ENCODE measurements at regions of chr1 and their contacts with region 1.

Region 1: DNA sequence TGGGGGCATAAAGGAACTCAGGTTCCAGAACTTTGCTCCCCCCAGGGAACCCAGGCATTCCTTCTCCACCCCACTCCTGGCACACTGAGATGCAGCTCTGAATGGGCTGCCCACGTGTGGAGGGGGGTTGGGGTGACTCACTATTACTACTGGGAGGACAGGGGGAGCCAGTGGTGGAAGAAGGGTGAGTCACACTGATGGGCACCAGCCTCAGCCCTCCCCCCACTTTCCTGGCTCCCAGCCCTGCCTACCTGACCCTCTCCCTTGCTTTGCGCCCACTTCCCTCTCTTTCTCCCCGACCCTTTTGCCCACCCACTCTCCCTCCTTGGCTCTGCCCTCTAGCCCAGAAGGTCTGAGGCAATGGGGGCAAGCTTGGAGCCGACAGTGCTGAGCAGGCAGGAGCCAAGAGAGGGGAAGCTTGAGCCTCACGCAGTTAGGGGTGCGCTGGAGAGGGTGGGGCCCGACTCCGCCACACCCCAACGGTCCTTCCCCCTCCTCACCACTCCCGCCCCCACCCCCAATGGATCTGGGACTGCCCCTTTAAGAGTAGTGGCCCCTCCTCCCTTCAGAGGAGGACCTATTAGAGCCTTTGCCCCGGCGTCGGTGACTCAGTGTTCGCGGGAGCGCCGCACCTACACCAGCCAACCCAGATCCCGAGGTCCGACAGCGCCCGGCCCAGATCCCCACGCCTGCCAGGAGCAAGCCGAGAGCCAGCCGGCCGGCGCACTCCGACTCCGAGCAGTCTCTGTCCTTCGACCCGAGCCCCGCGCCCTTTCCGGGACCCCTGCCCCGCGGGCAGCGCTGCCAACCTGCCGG is at the start of gene LMNA:
- DNase-seq: peak; percentile 73 to 96 (median 74)
- H3K4me3 ChIP-seq: peak within 1 kb of the TSS; percentile 81
- H3K4me3 Mint-ChIP-seq: peak within 1 kb of the TSS; percentile 94 to 98 (median 96)
- H3K27ac ChIP-seq: peak within 1 kb of the TSS; percentile 91
- H3K27ac Mint-ChIP-seq: peak within 1 kb of the TSS; percentile 95 to 99 (median 98)
- H3K4me1 ChIP-seq: peaks cover 41% of the 10 kb centered on the region
- H3K4me1 Mint-ChIP-seq: peaks cover 12 to 49% (median 27%) of the 10 kb centered on the region in 4 donors
- H3K27me3 ChIP-seq: no peaks in the 10 kb centered on the region
- H3K27me3 Mint-ChIP-seq: no peaks in the 10 kb centered on the region
- total RNA-seq, gene LMNA: 29.7 to 33.8 TPM

Region 2: GRCh38 chr1:156054500-156055280 is 59.6 kb before region 1 on chr1 and contains the start of gene LAMTOR2:
- CTCF ChIA-PET with region 1: no interaction called
- POLR2A ChIA-PET with region 1: no interaction called
- intact Hi-C with region 1: no loop called
- DNase-seq: peak; percentile 91 to 95 (median 93)
- H3K4me3 ChIP-seq: peak within 1 kb of the TSS; percentile 96 to 99
- H3K4me3 Mint-ChIP-seq: peak within 1 kb of the TSS; percentile 93 to 98 (median 96)
- H3K27ac ChIP-seq: peak within 1 kb of the TSS; percentile 84
- H3K27ac Mint-ChIP-seq: peak within 1 kb of the TSS; percentile 93 to 99 (median 96)
- H3K4me1 ChIP-seq: peaks cover 17% of the 10 kb centered on the region
- H3K4me1 Mint-ChIP-seq: peaks cover 13 to 48% (median 28%) of the 10 kb centered on the region in 4 donors
- H3K27me3 ChIP-seq: no peaks in the 10 kb centered on the region
- H3K27me3 Mint-ChIP-seq: no peaks in the 10 kb centered on the region
- total RNA-seq, gene LAMTOR2: 33.0 to 35.5 TPM

Region 3: DNA sequence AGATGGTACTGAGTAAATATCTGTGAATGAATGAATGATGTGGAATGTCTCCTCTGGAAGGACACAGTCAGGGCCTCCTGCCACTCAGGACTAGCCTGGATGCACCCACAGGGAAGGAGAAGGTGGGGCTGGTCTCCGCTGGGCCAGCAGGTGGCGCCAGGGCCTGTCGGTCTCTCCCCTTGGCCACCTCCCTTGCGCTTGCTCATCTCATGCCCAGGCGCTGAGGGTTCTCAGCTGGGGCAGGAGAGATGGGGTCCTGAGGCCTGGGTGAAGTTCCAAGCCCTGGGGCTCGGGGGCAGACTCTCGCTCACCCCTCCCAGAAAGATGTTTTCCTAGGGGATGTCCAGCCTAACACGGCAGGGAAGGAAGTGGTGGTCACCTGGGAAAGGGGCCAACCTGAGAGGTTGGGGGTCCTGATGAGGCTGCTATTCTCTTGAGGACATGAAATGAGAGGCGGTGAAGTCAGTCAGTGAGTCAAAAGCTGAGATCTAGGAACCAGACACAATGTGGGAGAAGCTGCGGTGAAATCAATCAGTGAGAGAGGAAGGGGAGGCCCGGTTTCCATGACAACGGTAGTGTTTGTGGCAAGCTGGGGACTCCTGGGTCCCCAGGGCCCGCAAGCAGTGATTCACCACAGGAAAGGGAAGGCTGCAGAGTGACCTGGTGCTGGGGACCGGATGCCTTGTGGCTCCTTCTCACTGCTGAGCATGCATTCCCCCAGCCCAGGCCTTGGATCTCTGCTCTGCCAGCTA is 17.5 kb before region 1 on chr1:
- CTCF ChIA-PET with region 1: interaction called, 157 read pairs
- POLR2A ChIA-PET with region 1: interaction called, 527 read pairs
- intact Hi-C with region 1: loop called (anchors 2 kb)
- DNase-seq: peak; percentile 88 to 98 (median 91)
- H3K4me3 ChIP-seq: peak overlapping the region in 1 of 2 donors; percentile 39
- H3K4me3 Mint-ChIP-seq: peak overlapping the region; percentile 39 to 85 (median 78)
- H3K27ac ChIP-seq: peak overlapping the region; percentile 78
- H3K27ac Mint-ChIP-seq: peak overlapping the region; percentile 90 to 100 (median 99)
- H3K4me1 ChIP-seq: peaks cover 37% of the 10 kb centered on the region
- H3K4me1 Mint-ChIP-seq: peaks cover 42 to 59% (median 48%) of the 10 kb centered on the region in 4 donors
- H3K27me3 ChIP-seq: no peaks in the 10 kb centered on the region
- H3K27me3 Mint-ChIP-seq: peaks cover 3 to 4% of the 10 kb centered on the region in 2 donors